ENCODE measurements at regions of chr7 and their contacts with region 1.

Region 1: GRCh38 chr7:108459931-108460551 is 3.8 kb upstream of the NRCAM start:
- DNase-seq: peak; percentile 60
- CTCF ChIP-seq: peak; percentile 63

Region 2: DNA sequence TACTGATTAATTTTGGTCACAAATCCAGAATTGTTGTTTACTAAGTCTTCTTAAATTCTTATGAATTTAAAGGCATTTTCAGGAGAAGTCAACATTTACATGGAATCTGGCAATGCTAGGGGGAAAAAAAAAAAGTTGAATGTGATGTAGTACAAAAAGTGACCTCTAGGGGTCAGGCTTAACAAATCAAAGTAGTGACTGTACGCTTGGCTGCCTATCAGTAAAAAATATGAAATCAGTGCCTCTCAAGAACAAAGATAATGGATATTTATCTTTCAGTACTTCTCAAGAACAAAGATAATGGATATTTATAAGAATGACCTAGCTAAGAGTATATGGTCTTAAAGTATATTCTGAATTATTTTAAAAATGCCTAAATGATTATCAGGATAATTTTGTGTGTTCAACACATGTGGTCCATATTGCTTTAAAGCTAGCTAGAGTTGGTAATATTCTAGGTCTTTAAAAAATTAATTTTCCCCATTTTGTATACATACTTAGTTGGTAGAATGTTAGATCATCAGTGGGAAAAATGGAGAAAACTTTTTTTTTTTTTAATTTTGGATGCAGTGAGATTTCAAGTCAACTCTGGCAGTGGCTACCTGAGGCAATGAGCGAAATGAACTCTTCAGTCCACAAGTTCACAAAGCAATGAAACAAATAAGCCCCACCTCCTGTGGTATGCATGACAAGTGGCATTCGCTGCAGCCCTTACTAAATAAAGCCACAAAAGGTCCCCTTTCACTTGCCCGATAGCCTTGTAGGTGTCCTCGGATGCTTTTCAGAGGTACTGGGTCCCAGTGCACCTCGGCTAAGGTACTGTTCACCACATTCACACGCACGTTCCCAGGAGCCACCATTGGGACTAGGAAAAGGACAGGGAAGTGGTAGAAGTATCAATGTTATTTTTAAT is 278.7 kb before region 1 on chr7:
- in situ Hi-C with region 1: loop called (anchors 10 kb)
- DNase-seq: peak; percentile 26
- CTCF ChIP-seq: peak; percentile 61

Region 3: DNA sequence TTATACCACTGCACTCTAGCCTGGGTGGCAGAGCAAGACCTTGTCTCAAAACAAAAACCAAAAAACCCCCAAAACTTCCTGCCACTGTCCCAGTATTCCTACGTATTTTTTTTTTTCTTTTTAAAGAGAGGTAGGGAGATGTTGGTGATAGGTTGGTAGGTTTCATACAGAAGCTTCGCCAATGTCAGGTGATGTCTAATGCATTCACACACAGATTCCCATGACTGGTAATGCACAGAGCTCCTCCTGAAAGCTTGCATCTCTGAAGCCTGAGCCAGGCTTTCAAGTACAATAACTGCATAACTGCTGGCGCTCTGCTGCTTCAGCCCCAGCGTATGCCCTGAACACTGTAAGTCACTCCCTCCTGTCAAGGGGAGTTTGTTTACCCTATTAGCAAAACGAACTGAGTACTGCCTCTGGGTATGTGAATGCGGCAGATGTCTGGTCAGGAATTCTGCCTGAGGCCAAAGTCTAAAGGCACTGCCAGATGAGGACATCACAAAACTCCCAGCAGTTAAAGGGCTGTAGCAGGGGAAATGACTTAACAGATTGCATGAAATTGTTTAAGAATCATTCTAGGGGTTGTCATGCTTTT is 101.6 kb before region 1 on chr7:
- in situ Hi-C with region 1: no loop called
- DNase-seq: no peak
- CTCF ChIP-seq: no peak

Measured in GM13977 (cell line).